ENCODE measurements at regions of chr10 and their contacts with region 1.

Region 1: GRCh38 chr10:30671026-30671616 is 41.6 kb upstream of the LYZL2 start:
- DNase-seq: peak; percentile 35
- H3K4me3 Mint-ChIP-seq: peak overlapping the region; percentile 43
- H3K27ac Mint-ChIP-seq: no peak overlapping the region
- H3K4me1 Mint-ChIP-seq: peaks cover 9% of the 10 kb centered on the region
- H3K27me3 Mint-ChIP-seq: peaks cover 16% of the 10 kb centered on the region

Region 2: DNA sequence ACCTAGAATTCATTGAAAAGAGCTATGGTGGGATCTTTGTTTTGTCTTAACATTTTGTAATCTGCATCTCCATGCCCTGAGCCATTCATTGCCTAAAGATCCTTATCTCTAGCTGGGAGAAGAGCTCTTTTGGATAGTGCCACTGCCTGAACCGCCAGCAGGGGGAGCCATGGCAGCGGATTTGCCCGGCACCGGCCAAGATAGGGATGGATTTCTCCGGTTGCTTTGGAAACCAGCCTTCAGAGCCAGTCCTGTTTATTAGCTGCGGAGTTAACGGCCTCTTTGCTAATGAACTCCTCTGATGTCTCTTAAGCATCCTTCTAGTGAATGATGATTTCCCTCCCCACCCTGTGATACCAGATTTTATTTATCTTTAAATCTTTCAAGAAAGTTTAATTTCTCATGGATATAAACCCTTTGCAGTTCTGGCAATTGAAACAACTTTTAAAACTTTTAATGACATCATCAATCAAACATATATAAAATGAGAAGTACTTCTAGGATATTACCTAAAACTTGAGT is 16.6 kb after region 1 on chr10:
- intact Hi-C with region 1: loop called (anchors 1 kb)
- DNase-seq: peak; percentile 63
- H3K4me3 Mint-ChIP-seq: no peak overlapping the region
- H3K27ac Mint-ChIP-seq: no peak overlapping the region
- H3K4me1 Mint-ChIP-seq: peaks cover 44% of the 10 kb centered on the region
- H3K27me3 Mint-ChIP-seq: peaks cover 5% of the 10 kb centered on the region

Measured in activated T-helper 1 cell treated with anti-CD3 and anti-CD28 coated beads, Interleukin-12 subunit alpha, Interleukin-12 subunit beta, Interleukin-2, Interleukin-4 antibody, amounts not matched to agents 30 ng/mL and 10 ng/mL and 1 ng/mL, durations not matched to agents 14 hours and 24 hours and 36 hours (primary cell).